Activated CD8-positive, alpha-beta T cell treated with anti-CD3 and anti-CD28 coated beads for 36 hours (primary cell): ENCODE measurements at regions of chr17 and their contacts with region 1.

Region 1: GRCh38 chr17:75412455-75413317 is 7.2 kb upstream of the GRB2 start:
- DNase-seq: peak; percentile 88
- ATAC-seq: peak; percentile 92
- H3K4me3 Mint-ChIP-seq: peak overlapping the region; percentile 33
- H3K27ac Mint-ChIP-seq: peak overlapping the region; percentile 23
- H3K4me1 Mint-ChIP-seq: peaks cover 14% of the 10 kb centered on the region
- H3K27me3 Mint-ChIP-seq: no peaks in the 10 kb centered on the region
- CTCF ChIP-seq: peak; percentile 81

Region 2: DNA sequence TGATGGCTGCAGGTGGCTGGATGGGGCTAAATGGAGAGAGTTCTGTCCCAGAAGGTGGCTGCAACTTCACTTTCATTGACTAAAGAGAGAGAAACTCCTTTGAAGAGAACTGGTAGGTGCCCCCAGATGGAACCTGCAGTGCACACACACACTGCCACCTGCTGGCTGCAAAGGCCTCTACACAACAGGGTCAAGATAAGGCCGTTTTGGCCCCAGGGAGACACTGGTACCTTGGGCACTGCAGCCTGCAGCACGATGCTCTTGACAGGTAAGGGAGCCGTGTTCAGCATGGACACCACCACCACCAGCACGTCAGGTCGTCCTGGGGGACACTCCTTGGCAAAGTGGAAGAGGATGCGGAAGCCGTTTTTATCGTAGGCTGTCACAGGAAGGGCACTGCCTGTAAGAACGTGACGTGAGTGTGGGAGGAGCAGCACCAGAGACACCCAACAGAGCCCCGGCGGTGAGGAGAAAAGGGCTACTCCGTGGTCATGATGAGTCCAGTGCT is 173.9 kb before region 1 on chr17:
- CTCF ChIA-PET with region 1: interaction called, 25 read pairs
- POLR2A ChIA-PET with region 1: no interaction called
- intact Hi-C with region 1: no loop called
- DNase-seq: peak; percentile 73
- ATAC-seq: peak; percentile 66
- H3K4me3 Mint-ChIP-seq: no peak overlapping the region
- H3K27ac Mint-ChIP-seq: peak overlapping the region; percentile 76
- H3K4me1 Mint-ChIP-seq: peaks cover 36% of the 10 kb centered on the region
- H3K27me3 Mint-ChIP-seq: no peaks in the 10 kb centered on the region
- CTCF ChIP-seq: peak; percentile 73

Region 3: GRCh38 chr17:75261336-75262111 is 151.2 kb before region 1 on chr17 and contains the starts of genes GGA3 and MRPS7:
- CTCF ChIA-PET with region 1: interaction called, 12 read pairs
- POLR2A ChIA-PET with region 1: interaction called, 6 read pairs
- intact Hi-C with region 1: no loop called
- DNase-seq: peak; percentile 97
- ATAC-seq: peak; percentile 96
- H3K4me3 Mint-ChIP-seq: peak within 1 kb of the TSS; percentile 95
- H3K27ac Mint-ChIP-seq: peak within 1 kb of the TSS; percentile 99
- H3K4me1 Mint-ChIP-seq: peaks cover 52% of the 10 kb centered on the region
- H3K27me3 Mint-ChIP-seq: no peaks in the 10 kb centered on the region
- CTCF ChIP-seq: no peak
- total RNA-seq, gene GGA3: 65.5 to 65.8 TPM
- total RNA-seq, gene MRPS7: 76.3 to 80.0 TPM

Region 4: DNA sequence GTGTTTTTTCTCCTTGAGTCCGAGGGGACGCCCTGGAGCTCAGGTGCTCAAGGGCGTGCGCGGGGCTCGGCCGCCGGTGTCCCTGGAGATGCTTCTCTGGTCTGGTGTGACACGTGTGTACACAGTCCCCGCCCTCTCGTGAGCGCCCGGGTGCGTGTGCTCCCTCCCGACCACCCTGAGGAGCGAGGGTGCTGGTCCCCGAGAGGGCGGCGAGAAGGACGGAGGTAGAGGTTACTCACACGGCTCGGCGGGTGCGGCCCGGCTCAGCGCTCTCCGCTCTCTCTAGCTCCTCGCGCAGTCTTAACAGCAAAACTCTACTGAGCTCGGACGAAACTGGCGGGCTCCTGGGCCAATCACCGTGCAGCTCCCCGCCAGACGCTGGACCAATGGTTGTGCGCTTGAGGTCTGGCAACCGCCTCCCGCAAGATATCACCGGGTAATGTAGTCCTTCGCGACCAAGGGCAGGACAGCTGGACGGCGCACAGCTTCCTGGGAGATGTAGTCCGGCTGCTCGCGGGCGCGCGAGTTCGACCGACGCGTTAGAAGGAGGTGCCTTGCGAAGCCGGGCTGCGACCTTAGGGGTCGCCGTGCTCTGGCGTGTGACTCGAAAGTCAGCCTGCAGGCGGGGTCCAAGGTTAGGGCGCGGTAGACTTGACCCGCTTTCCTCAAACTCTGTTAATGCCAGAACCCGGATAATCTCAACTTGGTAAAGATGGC is 123.4 kb before region 1 on chr17 and contains the start of gene SLC25A19:
- CTCF ChIA-PET with region 1: interaction called, 45 read pairs
- POLR2A ChIA-PET with region 1: interaction called, 7 read pairs
- intact Hi-C with region 1: no loop called
- DNase-seq: peak; percentile 99
- ATAC-seq: peak; percentile 93
- H3K4me3 Mint-ChIP-seq: peak within 1 kb of the TSS; percentile 89
- H3K27ac Mint-ChIP-seq: peak within 1 kb of the TSS; percentile 100
- H3K4me1 Mint-ChIP-seq: peaks cover 26% of the 10 kb centered on the region
- H3K27me3 Mint-ChIP-seq: no peaks in the 10 kb centered on the region
- CTCF ChIP-seq: no peak
- total RNA-seq, gene SLC25A19: 55.1 to 55.2 TPM

Region 5: GRCh38 chr17:75338335-75338734 is 74.4 kb before region 1 on chr17:
- CTCF ChIA-PET with region 1: interaction called, 21 read pairs
- POLR2A ChIA-PET with region 1: no interaction called
- intact Hi-C with region 1: no loop called
- DNase-seq: no peak
- ATAC-seq: peak; percentile 26
- H3K4me3 Mint-ChIP-seq: peak overlapping the region; percentile 56
- H3K27ac Mint-ChIP-seq: peak overlapping the region; percentile 90
- H3K4me1 Mint-ChIP-seq: peaks cover 72% of the 10 kb centered on the region
- H3K27me3 Mint-ChIP-seq: no peaks in the 10 kb centered on the region
- CTCF ChIP-seq: no peak

Region 6: DNA sequence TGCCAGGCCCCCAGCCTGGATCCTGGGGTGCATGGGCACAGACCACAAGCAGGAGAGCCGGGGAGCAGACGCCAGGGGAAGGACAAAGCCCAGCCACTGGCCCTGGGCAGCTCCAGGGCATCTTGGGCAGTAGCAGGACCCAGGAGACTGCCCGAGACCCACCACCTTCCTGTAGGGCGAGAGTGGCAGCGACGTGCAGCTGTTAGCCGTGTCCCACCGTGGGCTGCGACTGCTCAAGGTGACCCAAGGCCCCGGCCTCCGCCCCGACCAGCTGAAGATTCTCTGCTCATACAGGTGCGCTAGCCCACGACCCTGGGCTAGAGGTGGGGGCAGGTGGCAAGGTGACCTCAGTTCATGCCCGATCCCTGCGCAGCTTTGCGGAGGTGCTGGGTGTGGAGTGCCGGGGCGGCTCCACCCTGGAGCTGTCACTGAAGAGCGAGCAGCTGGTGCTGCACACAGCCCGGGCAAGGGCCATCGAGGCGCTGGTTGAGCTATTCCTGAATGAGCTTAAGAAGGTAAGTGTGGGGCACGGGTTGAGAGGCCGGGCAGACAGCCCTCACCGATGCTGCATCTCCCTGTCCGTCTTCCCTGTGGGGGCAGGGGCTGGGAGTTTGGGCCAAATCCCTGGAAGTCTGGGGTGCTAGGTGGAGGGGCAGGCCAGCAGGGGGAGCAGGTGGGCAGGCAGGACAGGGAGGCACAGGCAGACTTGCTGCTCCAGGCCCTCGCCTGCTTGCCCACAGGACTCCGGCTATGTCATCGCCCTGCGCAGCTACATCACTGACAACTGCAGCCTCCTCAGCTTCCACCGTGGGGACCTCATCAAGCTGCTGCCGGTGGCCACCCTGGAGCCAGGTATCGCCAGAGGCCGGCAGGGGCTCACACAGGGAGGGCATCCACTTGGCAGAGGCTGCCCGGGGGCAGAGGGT is 207.1 kb after region 1 on chr17:
- CTCF ChIA-PET with region 1: no interaction called
- POLR2A ChIA-PET with region 1: no interaction called
- intact Hi-C with region 1: no loop called
- DNase-seq: peak; percentile 25
- ATAC-seq: no peak
- H3K4me3 Mint-ChIP-seq: no peak overlapping the region
- H3K27ac Mint-ChIP-seq: no peak overlapping the region
- H3K4me1 Mint-ChIP-seq: no peaks in the 10 kb centered on the region
- H3K27me3 Mint-ChIP-seq: no peaks in the 10 kb centered on the region
- CTCF ChIP-seq: no peak